Activated naive CD4-positive, alpha-beta T cell treated with anti-CD3 and anti-CD28 coated beads for 36 hours (primary cell): ENCODE measurements at regions of chr14 and their contacts with region 1.

Region 1: DNA sequence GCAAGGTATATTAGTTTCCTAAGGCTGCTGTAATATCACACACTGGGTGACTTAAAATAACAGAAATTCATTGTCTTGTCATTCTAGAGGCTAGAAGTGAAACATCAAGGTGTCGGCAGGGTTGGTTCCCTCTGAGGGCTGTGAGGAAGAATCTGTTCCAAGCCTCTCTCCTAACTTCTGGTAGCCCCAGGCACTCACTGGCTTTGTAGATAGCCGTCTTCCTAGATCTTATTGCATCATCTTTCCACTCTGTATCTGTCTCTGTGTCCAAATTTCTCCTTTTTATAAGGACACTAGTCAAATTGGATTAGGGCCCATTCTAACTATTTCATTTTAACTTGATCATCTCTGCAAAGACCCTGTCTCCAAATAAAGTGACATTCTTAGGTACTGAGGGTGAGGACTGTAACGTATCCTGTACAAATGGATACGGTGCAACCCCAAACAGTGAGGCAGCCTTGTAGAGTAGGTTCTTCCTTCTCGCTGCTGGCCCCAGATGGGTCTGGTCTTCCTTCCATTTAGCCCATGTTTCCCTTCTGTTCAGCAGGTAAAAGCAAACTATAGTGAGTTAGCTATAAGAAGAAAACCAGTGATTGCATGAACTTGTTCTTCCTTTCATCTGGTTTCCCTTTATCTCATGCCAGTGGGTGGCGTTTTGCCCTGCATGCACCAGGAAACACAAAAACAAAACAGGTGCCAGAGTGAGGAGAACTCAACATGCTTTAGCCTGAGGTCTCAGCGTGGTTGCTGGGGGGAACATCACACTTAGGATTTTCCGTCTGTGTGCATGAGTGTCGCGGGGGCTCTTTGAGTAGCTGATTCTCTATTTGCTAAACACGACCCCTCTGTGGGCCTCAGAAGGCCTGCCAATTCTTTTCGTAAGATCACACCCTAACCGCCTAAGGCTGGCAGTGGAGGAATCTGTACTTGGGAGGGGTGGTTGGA is 19.5 kb downstream of the TTC9 start:
- DNase-seq: peak; percentile 82
- H3K4me3 Mint-ChIP-seq: peak overlapping the region; percentile 62
- H3K27ac Mint-ChIP-seq: peak overlapping the region; percentile 96
- H3K4me1 Mint-ChIP-seq: peaks cover 91% of the 10 kb centered on the region
- H3K27me3 Mint-ChIP-seq: no peaks in the 10 kb centered on the region

Region 2: GRCh38 chr14:70061108-70061507 is 600.1 kb before region 1 on chr14:
- CTCF ChIA-PET with region 1: no interaction called
- intact Hi-C with region 1: no loop called
- DNase-seq: no peak
- H3K4me3 Mint-ChIP-seq: no peak overlapping the region
- H3K27ac Mint-ChIP-seq: no peak overlapping the region
- H3K4me1 Mint-ChIP-seq: no peaks in the 10 kb centered on the region
- H3K27me3 Mint-ChIP-seq: peaks cover 8% of the 10 kb centered on the region

Region 3: GRCh38 chr14:70600382-70601157 is 60.7 kb before region 1 on chr14 and contains the start of gene MED6:
- CTCF ChIA-PET with region 1: interaction called, 4 read pairs
- intact Hi-C with region 1: loop called (anchors 1 kb)
- DNase-seq: peak; percentile 96
- H3K4me3 Mint-ChIP-seq: peak within 1 kb of the TSS; percentile 98
- H3K27ac Mint-ChIP-seq: peak within 1 kb of the TSS; percentile 93
- H3K4me1 Mint-ChIP-seq: peaks cover 23% of the 10 kb centered on the region
- H3K27me3 Mint-ChIP-seq: peaks cover 2% of the 10 kb centered on the region
- total RNA-seq, gene MED6: 48.5 to 48.9 TPM

Region 4: GRCh38 chr14:70646705-70647104 is 14.5 kb before region 1 on chr14:
- CTCF ChIA-PET with region 1: interaction called, 11 read pairs
- intact Hi-C with region 1: loop called (anchors 1 kb)
- DNase-seq: no peak
- H3K4me3 Mint-ChIP-seq: peak overlapping the region; percentile 17
- H3K27ac Mint-ChIP-seq: peak overlapping the region; percentile 74
- H3K4me1 Mint-ChIP-seq: peaks cover 66% of the 10 kb centered on the region
- H3K27me3 Mint-ChIP-seq: no peaks in the 10 kb centered on the region